Activated naive CD4-positive, alpha-beta T cell treated with anti-CD3 and anti-CD28 coated beads for 36 hours (primary cell): ENCODE measurements at regions of chr1 and their contacts with region 1.

Region 1: DNA sequence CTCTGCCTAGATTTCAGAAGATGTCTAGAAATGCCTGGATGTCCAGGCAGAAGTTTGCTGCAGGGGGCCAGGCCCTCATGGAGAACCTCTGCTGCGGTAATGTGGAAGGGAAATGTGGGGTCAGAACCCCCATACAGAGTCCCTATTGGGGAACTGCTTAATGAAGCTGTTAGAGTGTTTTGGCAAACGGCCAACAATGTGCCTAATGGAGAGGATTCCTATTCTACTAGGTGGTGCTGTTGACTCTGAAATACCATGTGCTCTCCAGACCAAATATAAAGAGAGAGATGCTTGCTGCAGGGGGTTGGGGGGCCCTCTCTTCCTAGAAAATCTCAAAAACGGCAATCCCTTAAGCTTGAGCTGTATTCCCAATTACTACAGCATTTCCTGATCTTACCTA is 57.1 kb upstream of the DR1 start:
- DNase-seq: no peak
- H3K4me3 Mint-ChIP-seq: no peak overlapping the region
- H3K27ac Mint-ChIP-seq: no peak overlapping the region
- H3K4me1 Mint-ChIP-seq: no peaks in the 10 kb centered on the region
- H3K27me3 Mint-ChIP-seq: no peaks in the 10 kb centered on the region

Region 2: GRCh38 chr1:93221913-93222312 is 66.6 kb before region 1 on chr1:
- CTCF ChIA-PET with region 1: no interaction called
- intact Hi-C with region 1: no loop called
- DNase-seq: no peak
- H3K4me3 Mint-ChIP-seq: no peak overlapping the region
- H3K27ac Mint-ChIP-seq: no peak overlapping the region
- H3K4me1 Mint-ChIP-seq: peaks cover 21% of the 10 kb centered on the region
- H3K27me3 Mint-ChIP-seq: no peaks in the 10 kb centered on the region

Region 3: GRCh38 chr1:93304716-93305138 is 16.2 kb after region 1 on chr1:
- CTCF ChIA-PET with region 1: interaction called, 11 read pairs
- intact Hi-C with region 1: no loop called
- DNase-seq: peak; percentile 67
- H3K4me3 Mint-ChIP-seq: no peak overlapping the region
- H3K27ac Mint-ChIP-seq: no peak overlapping the region
- H3K4me1 Mint-ChIP-seq: no peaks in the 10 kb centered on the region
- H3K27me3 Mint-ChIP-seq: no peaks in the 10 kb centered on the region